ENCODE measurements at regions of chr1 and their contacts with region 1.

Region 1: GRCh38 chr1:156860113-156860627 is 495 bp upstream of the NTRK1 start:
- DNase-seq: peak in 40 of 42 donors; percentile 14 to 81 (median 57)

Region 2: GRCh38 chr1:156797212-156797871 is 62.8 kb before region 1 on chr1:
- intact Hi-C with region 1: loop called (anchors 10 kb)
- DNase-seq: peak in 37 of 42 donors; percentile 25 to 84 (median 59)

Region 3: DNA sequence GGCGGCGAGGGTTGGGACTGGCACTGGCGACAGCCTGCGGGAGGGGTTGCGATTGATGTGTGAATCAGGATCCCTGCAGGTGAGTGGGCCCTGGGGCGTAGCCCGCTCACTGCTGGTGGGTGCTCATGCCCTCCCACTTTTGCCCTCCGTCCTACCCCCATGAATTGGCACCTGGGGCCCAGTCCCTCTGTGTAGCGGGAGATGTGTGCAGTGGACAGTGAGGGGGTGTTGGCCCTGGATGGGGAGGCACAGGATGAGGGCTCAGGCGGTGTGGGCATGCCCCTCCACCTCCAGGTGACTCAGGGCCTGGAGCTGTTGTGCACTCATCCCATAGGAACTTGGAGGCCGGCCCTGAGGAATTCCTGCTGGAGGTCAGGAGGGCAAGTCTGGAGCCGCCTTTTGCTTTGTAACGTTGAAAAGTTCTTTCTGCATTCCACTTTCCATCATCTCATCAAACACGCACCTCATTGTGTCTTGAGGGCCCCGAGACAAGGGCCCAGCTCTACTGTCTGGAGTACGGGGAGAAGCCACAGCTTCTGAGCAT is 36.4 kb after region 1 on chr1:
- intact Hi-C with region 1: no loop called
- DNase-seq: no peak

Measured in head of caudate nucleus (tissue), 42 donors.